GM12878 (cell line): ENCODE measurements at regions of chr3 and their contacts with region 1.

Region 1: GRCh38 chr3:43879166-43879565 is 188.4 kb downstream of the ABHD5 start:
- DNase-seq: no peak
- ATAC-seq: peak; percentile 88
- H3K4me3 ChIP-seq: no peak overlapping the region
- H3K27ac ChIP-seq: no peak overlapping the region
- H3K4me1 ChIP-seq: no peaks in the 10 kb centered on the region; the same call in 1 of the 2 replicates
- H3K27me3 ChIP-seq: peaks cover 2 to 7% of the 10 kb centered on the region in 2 experiments; a peak in 1 of 4 replicates
- CTCF ChIP-seq: peak; percentile 52 to 57 (median 55)
- EP300 ChIP-seq: no peak
- POLR2A ChIP-seq: no peak
- RAD21 ChIP-seq: peak; percentile 80

Region 2: DNA sequence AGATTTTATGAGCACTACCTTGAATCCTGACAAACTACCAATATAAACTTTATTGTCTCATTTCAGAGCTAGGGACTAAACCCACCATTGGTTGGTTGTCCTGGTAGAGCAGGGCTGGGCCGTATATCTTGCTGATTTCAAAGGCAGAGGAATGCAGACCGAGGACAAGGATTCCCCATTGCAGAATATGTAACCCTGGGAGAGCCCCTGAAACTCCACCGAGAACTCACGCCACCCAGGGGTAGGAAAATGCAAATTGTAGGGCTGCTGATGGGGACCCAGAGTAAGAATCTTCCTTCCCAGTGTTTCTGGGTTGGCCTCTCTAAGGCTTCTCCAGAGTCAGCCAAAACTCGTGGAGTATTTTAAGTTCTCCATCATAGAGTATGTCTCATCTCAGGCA is 46.9 kb after region 1 on chr3:
- CTCF ChIA-PET with region 1: interaction called, 5 read pairs
- POLR2A ChIA-PET with region 1: no interaction called
- RAD21 ChIA-PET with region 1: interaction called, 3 read pairs
- SMC1A ChIA-PET with region 1: no interaction called
- in situ Hi-C with region 1: no loop called
- intact Hi-C with region 1: loop called (anchors 1 kb)
- DNase-seq: no peak
- ATAC-seq: no peak
- H3K4me3 ChIP-seq: no peak overlapping the region
- H3K27ac ChIP-seq: no peak overlapping the region
- H3K4me1 ChIP-seq: no peaks in the 10 kb centered on the region
- H3K27me3 ChIP-seq: peaks cover 0 to 8% of the 10 kb centered on the region in 2 experiments; a peak in 2 of 4 replicates
- CTCF ChIP-seq: peak in 1 of 3 experiments; percentile 17; a peak in 2 of 6 replicates
- EP300 ChIP-seq: no peak
- POLR2A ChIP-seq: no peak
- RAD21 ChIP-seq: 0 out of 2 replicates have a peak, but pooled peaks have one; percentile 13

Region 3: DNA sequence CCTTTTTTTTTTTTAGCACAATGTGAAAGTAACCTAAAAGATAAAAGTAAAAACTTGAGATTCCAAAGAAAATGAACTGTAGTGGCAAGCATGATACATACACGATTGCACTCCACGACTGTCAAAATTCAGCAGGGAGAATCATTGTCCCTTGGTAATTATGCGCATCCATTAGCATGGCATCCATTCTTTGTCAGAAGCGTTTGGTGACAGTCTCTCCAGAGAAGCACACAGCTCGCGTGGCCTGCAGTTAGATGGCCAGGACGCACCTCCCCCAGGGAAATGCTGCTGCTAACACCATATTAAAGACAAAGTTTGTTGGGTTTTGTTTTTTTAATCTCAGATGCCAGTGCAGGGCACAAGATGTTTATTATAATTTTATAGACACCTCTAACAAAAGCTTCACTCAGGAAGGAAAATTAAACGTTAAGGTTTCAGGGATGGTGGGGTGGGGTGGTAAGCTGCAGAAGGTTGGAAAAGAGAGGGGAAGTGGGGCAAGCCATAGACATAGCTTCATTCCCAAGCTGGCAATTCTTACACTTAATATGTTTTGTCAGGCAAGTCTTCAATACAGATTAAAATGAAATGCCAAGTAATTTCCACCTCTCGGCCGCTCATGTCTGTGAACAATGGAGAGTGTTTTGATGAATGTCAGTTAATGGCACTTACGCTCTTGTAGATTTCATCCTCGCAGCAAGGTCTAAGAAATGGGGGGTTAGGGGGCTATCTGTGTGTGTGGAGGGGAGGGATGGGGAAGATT is 219.7 kb after region 1 on chr3:
- CTCF ChIA-PET with region 1: no interaction called
- POLR2A ChIA-PET with region 1: no interaction called
- RAD21 ChIA-PET with region 1: no interaction called
- SMC1A ChIA-PET with region 1: no interaction called
- in situ Hi-C with region 1: no loop called
- intact Hi-C with region 1: no loop called
- DNase-seq: no peak
- ATAC-seq: no peak
- H3K4me3 ChIP-seq: no peak overlapping the region
- H3K27ac ChIP-seq: no peak overlapping the region
- H3K4me1 ChIP-seq: no peaks in the 10 kb centered on the region
- H3K27me3 ChIP-seq: no peaks in the 10 kb centered on the region; a peak in 1 of 4 replicates
- CTCF ChIP-seq: no peak
- EP300 ChIP-seq: no peak
- POLR2A ChIP-seq: no peak
- RAD21 ChIP-seq: no peak

Region 4: GRCh38 chr3:44114142-44114541 is 235.0 kb after region 1 on chr3:
- CTCF ChIA-PET with region 1: interaction called, 15 read pairs
- POLR2A ChIA-PET with region 1: no interaction called
- RAD21 ChIA-PET with region 1: interaction called, 12 read pairs
- SMC1A ChIA-PET with region 1: interaction called, 12 read pairs
- in situ Hi-C with region 1: no loop called
- intact Hi-C with region 1: loop called (anchors 5 kb)
- DNase-seq: no peak
- ATAC-seq: peak; percentile 96
- H3K4me3 ChIP-seq: no peak overlapping the region
- H3K27ac ChIP-seq: no peak overlapping the region
- H3K4me1 ChIP-seq: no peaks in the 10 kb centered on the region
- H3K27me3 ChIP-seq: no peaks in the 10 kb centered on the region
- CTCF ChIP-seq: peak; percentile 59 to 68 (median 59)
- EP300 ChIP-seq: no peak
- POLR2A ChIP-seq: no peak
- RAD21 ChIP-seq: peak; percentile 63